MCF 10A (cell line): ENCODE measurements at regions of chrX and their contacts with region 1.

Region 1: DNA sequence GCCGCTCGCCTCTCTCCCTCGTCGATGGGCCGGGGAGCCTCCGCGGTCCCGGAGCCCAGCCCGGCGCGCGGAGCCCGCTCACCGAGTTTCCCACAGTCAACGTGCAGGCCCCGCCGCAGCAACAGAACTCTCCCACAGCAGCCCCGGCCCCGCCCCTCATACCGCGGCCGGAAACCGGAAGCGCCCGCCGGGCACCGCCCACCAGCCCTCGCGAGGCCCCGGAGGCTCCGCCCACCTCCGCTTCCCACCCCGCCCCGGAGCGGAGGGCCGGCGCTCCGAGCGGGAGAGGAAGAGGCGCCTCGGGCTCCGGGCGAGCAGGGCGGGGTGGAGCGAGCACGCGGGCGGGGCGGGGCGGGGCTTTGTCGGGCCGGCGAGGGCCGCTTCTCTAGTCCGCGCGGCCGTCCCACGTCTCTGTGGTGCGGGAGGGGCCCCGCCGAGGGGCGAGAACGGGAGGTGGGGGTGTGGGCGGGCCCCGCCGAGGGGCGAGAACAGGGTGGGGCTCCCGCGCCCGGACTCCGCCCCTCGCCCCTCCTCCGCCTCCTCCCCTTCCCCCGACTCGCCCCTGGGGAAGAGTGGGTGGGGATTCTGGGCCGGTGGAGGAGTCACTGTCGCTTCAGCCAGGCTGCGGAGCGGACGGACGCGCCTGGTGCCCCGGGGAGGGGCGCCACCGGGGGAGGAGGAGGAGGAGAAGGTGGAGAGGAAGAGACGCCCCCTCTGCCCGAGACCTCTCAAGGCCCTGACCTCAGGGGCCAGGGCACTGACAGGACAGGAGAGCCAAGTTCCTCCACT is at the starts of genes ABCD1 and BCAP31:
- DNase-seq: peak; percentile 81
- H3K4me3 Mint-ChIP-seq: peak within 1 kb of the TSS; percentile 82
- H3K27ac Mint-ChIP-seq: peak within 1 kb of the TSS; percentile 79
- H3K4me1 Mint-ChIP-seq: peaks cover 19% of the 10 kb centered on the region
- H3K27me3 Mint-ChIP-seq: no peaks in the 10 kb centered on the region
- CTCF ChIP-seq: no peak
- total RNA-seq, gene ABCD1: 3.5 and 4.1 TPM in 2 replicates
- total RNA-seq, gene BCAP31: 197 and 203 TPM in 2 replicates

Region 2: DNA sequence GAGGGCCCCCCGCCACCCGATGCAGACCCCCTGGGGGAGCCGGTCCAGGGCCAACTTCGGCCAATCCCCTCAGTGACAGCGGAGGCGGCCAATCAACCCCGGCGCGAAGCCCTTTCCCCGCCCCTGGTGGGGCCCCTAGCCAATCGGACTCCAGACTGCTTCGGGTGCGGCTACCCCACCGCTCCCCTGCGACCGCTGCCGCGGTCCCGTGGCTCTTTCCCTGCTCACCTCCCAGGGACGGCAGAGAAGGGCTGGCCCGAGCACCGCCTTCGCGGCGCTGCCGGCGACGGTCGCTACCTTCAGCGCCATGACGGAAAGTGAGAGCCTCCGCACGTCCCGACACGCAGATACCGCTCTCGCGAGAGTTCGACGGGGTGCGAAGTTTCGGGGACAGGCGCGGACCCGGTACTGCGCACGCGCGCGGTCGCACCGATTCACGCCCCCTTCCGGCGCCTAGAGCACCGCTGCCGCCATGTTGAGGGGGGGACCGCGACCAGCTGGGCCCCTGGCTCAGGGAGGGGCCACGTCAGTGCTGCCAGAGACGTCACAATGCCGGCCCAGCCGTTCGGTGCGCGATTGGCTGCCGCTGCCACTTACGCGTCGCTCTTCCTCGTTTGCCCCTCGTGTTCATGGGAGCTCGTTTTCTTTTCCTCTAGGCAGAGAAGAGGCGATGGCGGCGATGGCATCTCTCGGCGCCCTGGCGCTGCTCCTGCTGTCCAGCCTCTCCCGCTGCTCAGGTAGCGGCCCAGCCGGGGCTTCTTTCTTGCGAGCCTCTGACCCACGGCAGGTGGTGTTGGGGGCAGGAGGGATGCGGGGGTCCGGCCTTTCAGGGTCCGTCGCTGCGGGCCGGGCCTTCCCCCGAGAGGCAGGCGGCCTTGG is 69.8 kb after region 1 on chrX and contains the starts of genes IDH3G and SSR4:
- CTCF ChIA-PET with region 1: interaction called, 3 read pairs
- POLR2A ChIA-PET with region 1: interaction called, 13 read pairs
- intact Hi-C with region 1: loop called (anchors 2 kb)
- DNase-seq: peak; percentile 90
- H3K4me3 Mint-ChIP-seq: peak within 1 kb of the TSS; percentile 91
- H3K27ac Mint-ChIP-seq: peak within 1 kb of the TSS; percentile 91
- H3K4me1 Mint-ChIP-seq: no peaks in the 10 kb centered on the region
- H3K27me3 Mint-ChIP-seq: no peaks in the 10 kb centered on the region
- CTCF ChIP-seq: no peak
- total RNA-seq, gene IDH3G: 56.5 and 65.4 TPM in 2 replicates
- total RNA-seq, gene SSR4: 328 and 371 TPM in 2 replicates